Motor neuron (in vitro differentiated cells): ENCODE measurements at regions of chr6 and their contacts with region 1.

Region 1: GRCh38 chr6:33771146-33772081 is 17.5 kb downstream of the LEMD2 start:
- ATAC-seq: peak; percentile 70 to 84 (median 81)
- H3K4me3 ChIP-seq: no peak overlapping the region
- H3K27ac ChIP-seq: no peak overlapping the region
- H3K4me1 ChIP-seq: peaks cover 31 to 42% of the 10 kb centered on the region in 2 donors

Region 2: DNA sequence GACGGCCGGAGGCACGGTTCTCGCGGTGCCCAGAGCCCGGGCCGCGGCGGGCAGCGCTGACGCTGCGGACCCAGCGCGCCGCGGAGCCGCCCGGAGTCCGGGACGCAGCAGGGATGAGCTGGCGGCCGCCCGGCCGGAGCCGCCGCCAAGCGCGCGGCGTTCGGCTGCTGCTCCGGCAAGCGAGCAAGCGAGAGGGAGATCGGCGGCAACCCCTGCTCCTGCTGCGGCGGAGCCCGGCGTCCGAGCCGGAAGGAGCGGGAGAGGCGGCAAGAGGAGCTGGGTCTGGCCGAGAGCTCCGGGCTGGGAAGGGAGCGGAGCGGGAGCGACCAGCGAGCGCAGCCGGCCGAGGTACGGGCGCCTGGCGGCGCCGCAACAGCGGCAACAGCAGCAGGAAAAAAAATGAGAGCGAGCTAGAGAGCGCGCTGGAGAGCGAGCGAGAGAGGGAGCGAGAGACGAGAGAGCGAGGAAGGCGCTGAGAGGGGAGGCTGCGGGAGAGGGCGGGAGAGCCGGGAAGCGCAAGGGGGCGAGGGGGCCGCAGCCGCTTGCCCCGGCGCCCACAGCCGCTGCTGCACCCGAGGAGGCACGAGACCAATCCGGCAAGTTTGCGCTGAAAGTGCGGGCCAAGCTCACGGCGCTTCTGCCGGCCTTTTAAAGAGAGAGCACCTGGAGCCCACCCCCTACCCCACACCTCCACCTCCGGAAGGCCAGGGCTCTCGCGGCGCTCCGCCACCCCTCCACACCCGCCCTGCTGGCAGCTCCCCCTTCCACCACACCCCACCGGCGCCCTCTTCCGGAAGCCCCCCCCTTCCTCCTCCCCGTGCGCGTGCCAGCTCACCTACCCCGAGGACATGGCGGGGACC is 374.0 kb after region 1 on chr6:
- in situ Hi-C with region 1: loop called in 7 of 9 experiments (anchors 10 to 25 kb)
- ATAC-seq: peak; percentile 16 to 80 (median 36)
- H3K4me3 ChIP-seq: peak overlapping the region; percentile 35 to 52 (median 38)
- H3K27ac ChIP-seq: peak overlapping the region in 1 of 2 donors; percentile 44
- H3K4me1 ChIP-seq: peaks cover 29 to 47% of the 10 kb centered on the region in 2 donors